Panc1 (cell line): ENCODE measurements at regions of chr2 and their contacts with region 1.

Region 1: GRCh38 chr2:75007819-75008218 is 49.4 kb downstream of the POLE4 start:
- DNase-seq: no peak
- ATAC-seq: no peak
- H3K4me3 ChIP-seq: no peak overlapping the region
- H3K27ac ChIP-seq: no peak overlapping the region
- H3K4me1 ChIP-seq: no peaks in the 10 kb centered on the region
- H3K27me3 ChIP-seq: no peaks in the 10 kb centered on the region
- CTCF ChIP-seq: no peak; the same call in 1 of the 2 replicates

Region 2: GRCh38 chr2:74735544-74735943 is 272.3 kb before region 1 on chr2:
- CTCF ChIA-PET with region 1: no interaction called
- POLR2A ChIA-PET with region 1: interaction called, 12 read pairs
- in situ Hi-C with region 1: no loop called
- intact Hi-C with region 1: no loop called
- DNase-seq: no peak
- ATAC-seq: no peak
- H3K4me3 ChIP-seq: no peak overlapping the region
- H3K27ac ChIP-seq: no peak overlapping the region
- H3K4me1 ChIP-seq: no peaks in the 10 kb centered on the region
- H3K27me3 ChIP-seq: no peaks in the 10 kb centered on the region
- CTCF ChIP-seq: no peak

Region 3: DNA sequence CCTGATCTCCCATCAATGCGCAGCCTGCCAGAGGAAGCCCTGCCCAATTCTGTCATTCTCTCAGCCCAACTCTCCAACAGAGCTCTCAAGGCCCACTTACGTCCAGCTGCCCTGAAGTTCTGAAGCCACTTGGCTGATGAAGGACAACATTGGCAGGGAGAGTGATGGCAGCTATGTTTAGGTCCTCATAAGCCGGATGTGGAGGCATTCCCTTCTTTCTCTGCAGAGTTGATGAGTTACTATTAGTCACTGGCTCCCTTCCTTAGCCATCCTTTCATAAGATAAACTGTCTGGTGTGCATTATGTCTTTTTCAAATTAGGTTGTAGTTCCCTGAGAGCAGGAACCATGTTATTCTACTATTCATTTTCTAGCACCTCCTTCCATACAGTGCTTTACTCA is 214.0 kb after region 1 on chr2:
- CTCF ChIA-PET with region 1: no interaction called
- POLR2A ChIA-PET with region 1: no interaction called
- in situ Hi-C with region 1: no loop called
- intact Hi-C with region 1: no loop called
- DNase-seq: no peak
- ATAC-seq: no peak
- H3K4me3 ChIP-seq: no peak overlapping the region
- H3K27ac ChIP-seq: no peak overlapping the region
- H3K4me1 ChIP-seq: no peaks in the 10 kb centered on the region
- H3K27me3 ChIP-seq: no peaks in the 10 kb centered on the region; the same call in 1 of the 2 replicates
- CTCF ChIP-seq: no peak